Gastrocnemius medialis (tissue), 4 donors: ENCODE measurements at regions of chr12 and their contacts with region 1.

Region 1: GRCh38 chr12:112382232-112382796 is at the start of gene HECTD4:
- DNase-seq: peak; percentile 86 to 89
- ATAC-seq: peak; percentile 97
- H3K4me3 ChIP-seq: peak within 1 kb of the TSS; percentile 65 to 88 (median 77)
- H3K27ac ChIP-seq: peak within 1 kb of the TSS; percentile 78 to 90 (median 86)
- H3K4me1 ChIP-seq: peaks cover 14% of the 10 kb centered on the region in 2 donors
- H3K27me3 ChIP-seq: no peaks in the 10 kb centered on the region
- CTCF ChIP-seq: no peak
- POLR2A ChIP-seq: peak; percentile 81 to 90
- total RNA-seq, gene HECTD4: 12.9 to 23.3 (median 16.8) TPM

Region 2: GRCh38 chr12:111942557-111942956 is 439.8 kb before region 1 on chr12:
- in situ Hi-C with region 1: loop called in 1 of 4 experiments (anchors 10 kb)
- intact Hi-C with region 1: no loop called
- DNase-seq: no peak
- ATAC-seq: no peak
- H3K4me3 ChIP-seq: no peak overlapping the region
- H3K27ac ChIP-seq: no peak overlapping the region
- H3K4me1 ChIP-seq: peaks cover 9 to 13% of the 10 kb centered on the region in 2 donors
- H3K27me3 ChIP-seq: no peaks in the 10 kb centered on the region
- CTCF ChIP-seq: no peak
- POLR2A ChIP-seq: no peak

Region 3: GRCh38 chr12:112125250-112125999 is 256.9 kb before region 1 on chr12 and contains the start of gene TRAFD1:
- in situ Hi-C with region 1: no loop called
- intact Hi-C with region 1: loop called (anchors 10 kb)
- DNase-seq: peak; percentile 96 to 97
- ATAC-seq: peak; percentile 96 to 98
- H3K4me3 ChIP-seq: peak within 1 kb of the TSS; percentile 80 to 96 (median 92)
- H3K27ac ChIP-seq: peak within 1 kb of the TSS; percentile 86 to 97 (median 88)
- H3K4me1 ChIP-seq: peaks cover 19 to 33% of the 10 kb centered on the region in 2 donors
- H3K27me3 ChIP-seq: no peaks in the 10 kb centered on the region
- CTCF ChIP-seq: no peak
- POLR2A ChIP-seq: peak; percentile 92 to 95
- total RNA-seq, gene TRAFD1: 8.9 to 17.7 (median 14.5) TPM

Region 4: DNA sequence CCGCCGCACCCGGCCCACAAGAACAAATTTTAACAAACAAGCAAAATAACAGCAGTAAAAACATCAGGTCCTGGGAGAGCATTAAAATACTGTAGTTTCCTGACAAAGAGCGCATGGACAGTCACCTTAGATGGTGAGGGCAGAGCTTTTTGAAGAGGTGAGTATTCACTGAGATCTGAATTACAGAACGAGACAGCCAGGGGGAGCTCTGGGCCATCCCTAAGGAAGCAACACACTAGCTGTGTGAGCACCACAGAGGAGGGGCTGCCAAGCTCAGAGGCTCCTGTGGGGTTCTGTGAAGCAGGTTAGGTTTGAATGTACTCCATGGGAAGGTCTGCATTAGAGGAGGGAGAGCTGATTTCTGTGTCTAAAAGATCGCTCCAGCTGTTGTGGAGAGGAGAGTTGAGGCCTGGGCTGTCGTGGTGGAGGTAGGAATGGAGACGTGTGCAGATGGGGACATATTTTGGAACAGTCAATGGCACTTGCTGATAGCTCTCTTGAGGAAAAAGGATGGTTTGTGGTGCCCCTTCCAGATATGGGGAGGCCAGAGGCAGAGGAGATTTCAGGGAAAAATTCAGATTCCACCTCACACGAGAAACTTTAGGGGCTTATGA is 184.1 kb before region 1 on chr12:
- in situ Hi-C with region 1: loop called in 1 of 4 experiments (anchors 25 kb)
- intact Hi-C with region 1: loop called (anchors 2 kb)
- DNase-seq: no peak
- ATAC-seq: peak; percentile 45 to 53
- H3K4me3 ChIP-seq: no peak overlapping the region
- H3K27ac ChIP-seq: no peak overlapping the region
- H3K4me1 ChIP-seq: no peaks in the 10 kb centered on the region
- H3K27me3 ChIP-seq: no peaks in the 10 kb centered on the region
- CTCF ChIP-seq: peak in 4 of 5 experiments; percentile 21 to 45 (median 32)
- POLR2A ChIP-seq: no peak

Region 5: DNA sequence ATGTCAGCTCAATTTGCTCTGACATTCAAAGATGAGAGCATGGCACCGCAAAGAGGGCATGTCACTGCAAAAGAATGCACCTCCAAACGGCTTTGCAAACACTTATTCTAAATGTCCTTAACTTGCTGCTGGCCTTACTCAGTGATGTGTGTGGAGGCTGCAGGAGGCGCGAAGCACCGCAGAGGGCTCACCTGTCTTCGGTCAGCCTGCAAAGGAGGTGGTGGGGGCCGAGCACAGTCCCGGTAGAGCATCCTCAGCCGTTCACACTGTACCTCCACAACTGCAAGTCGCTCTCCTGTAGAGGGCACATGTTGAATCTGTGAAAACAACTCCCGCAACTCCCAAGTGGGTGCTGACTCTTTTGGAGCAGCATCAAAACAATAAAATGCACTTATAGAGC is 163.1 kb before region 1 on chr12:
- in situ Hi-C with region 1: loop called in 1 of 4 experiments (anchors 25 kb)
- intact Hi-C with region 1: no loop called
- DNase-seq: no peak
- ATAC-seq: no peak
- H3K4me3 ChIP-seq: no peak overlapping the region
- H3K27ac ChIP-seq: no peak overlapping the region
- H3K4me1 ChIP-seq: no peaks in the 10 kb centered on the region
- H3K27me3 ChIP-seq: no peaks in the 10 kb centered on the region
- CTCF ChIP-seq: no peak
- POLR2A ChIP-seq: no peak

Region 6: GRCh38 chr12:112283546-112283945 is 98.8 kb before region 1 on chr12:
- in situ Hi-C with region 1: loop called in 3 of 4 experiments (anchors 10 to 25 kb)
- intact Hi-C with region 1: loop called (anchors 2 kb)
- DNase-seq: peak in 1 of 2 donors; percentile 20
- ATAC-seq: peak; percentile 60 to 73
- H3K4me3 ChIP-seq: no peak overlapping the region
- H3K27ac ChIP-seq: peak overlapping the region in 1 of 4 donors; percentile 13
- H3K4me1 ChIP-seq: peaks cover 21 to 32% of the 10 kb centered on the region in 2 donors
- H3K27me3 ChIP-seq: no peaks in the 10 kb centered on the region
- CTCF ChIP-seq: no peak
- POLR2A ChIP-seq: no peak

Region 7: DNA sequence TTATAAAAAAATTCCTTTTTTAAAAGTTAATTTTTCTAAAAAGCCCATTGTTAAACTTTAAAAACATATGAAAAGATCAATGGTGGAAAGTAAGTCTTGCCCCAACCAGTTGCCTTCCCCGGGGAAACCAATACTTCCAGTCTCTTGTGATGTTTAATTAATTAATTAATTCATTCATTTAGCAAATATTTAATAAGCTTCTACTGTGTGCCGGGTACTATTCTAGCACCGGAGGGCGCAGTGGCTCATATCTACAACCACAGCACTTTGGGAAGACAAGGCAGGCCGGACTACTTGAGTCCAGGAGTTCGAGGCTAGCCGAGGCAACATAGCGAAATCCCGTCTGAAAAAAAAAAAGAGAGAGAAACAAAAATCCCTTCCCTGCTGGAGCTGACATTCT is 87.5 kb before region 1 on chr12:
- in situ Hi-C with region 1: loop called in 3 of 4 experiments (anchors 10 to 25 kb)
- intact Hi-C with region 1: loop called (anchors 2 kb)
- DNase-seq: no peak
- ATAC-seq: no peak
- H3K4me3 ChIP-seq: no peak overlapping the region
- H3K27ac ChIP-seq: no peak overlapping the region
- H3K4me1 ChIP-seq: peaks cover 11 to 12% of the 10 kb centered on the region in 2 donors
- H3K27me3 ChIP-seq: no peaks in the 10 kb centered on the region
- CTCF ChIP-seq: peak in 1 of 5 experiments; percentile 28
- POLR2A ChIP-seq: no peak